RWPE1 (cell line): ENCODE measurements at regions of chr5 and their contacts with region 1.

Region 1: DNA sequence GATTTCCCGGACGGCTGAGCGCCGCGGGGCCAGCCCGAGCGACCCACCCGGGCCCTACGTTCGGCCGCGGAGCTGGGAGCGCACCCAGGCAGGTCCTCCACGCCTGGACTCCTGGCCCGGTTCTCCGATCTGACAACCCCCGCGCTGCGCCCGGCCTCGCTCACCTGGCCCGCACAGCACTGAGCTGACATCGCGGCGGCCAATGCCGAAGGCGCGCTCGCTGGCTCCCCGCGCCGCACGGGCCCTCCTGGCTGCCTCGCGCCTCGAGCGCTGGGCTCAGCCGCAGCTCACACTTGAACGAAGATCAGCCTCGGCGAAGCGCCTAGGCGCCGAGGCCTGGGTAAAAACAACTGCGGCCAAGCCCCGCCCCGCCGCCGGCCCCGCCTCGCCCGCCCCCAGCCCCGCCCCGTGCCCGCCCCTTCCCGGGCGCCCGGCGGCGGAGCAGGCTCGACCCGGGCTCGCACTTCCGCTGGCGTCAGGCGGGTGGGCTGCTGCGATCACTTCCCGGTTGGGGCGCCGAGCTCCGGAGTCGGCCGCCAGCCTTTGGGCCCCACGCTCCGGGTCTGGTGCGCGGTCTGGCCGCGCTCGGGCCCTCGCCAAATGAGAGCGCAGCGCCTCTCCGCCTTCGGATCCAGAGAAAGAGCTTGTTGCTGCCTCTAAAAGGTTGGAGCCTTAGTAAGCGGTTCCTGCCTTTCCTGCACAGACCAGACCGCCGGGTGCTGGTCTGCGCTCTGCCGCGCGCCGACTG is at the start of gene SERINC5:
- DNase-seq: peak; percentile 89
- H3K27ac ChIP-seq: peak within 1 kb of the TSS; percentile 90
- CTCF ChIP-seq: no peak

Region 2: DNA sequence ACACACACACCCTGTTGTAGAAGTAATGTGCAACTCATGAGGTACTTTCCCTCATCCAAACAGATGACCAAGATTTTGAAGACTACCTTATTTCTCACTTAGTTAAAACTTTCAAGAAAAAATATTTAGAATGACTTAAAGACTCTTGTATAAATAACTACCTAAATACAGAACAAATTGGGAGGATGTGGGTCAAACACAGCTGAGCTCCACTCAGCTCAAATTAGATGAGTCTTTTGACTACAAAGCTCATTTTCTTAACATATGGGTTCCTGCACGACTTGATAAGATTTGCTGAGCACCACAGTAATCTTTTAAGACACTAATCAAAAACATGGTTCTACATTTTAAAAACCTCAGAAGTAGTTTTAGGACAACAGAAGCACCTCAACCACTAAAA is 273.8 kb before region 1 on chr5:
- CTCF ChIA-PET with region 1: no interaction called
- POLR2A ChIA-PET with region 1: no interaction called
- DNase-seq: no peak
- H3K27ac ChIP-seq: no peak overlapping the region
- CTCF ChIP-seq: no peak

Region 3: GRCh38 chr5:80002677-80003076 is 253.2 kb before region 1 on chr5:
- CTCF ChIA-PET with region 1: no interaction called
- POLR2A ChIA-PET with region 1: interaction called, 16 read pairs
- DNase-seq: no peak
- H3K27ac ChIP-seq: no peak overlapping the region
- CTCF ChIP-seq: no peak

Region 4: GRCh38 chr5:80407735-80408482 is 152.0 kb after region 1 on chr5 and contains the start of gene ZFYVE16:
- CTCF ChIA-PET with region 1: no interaction called
- POLR2A ChIA-PET with region 1: no interaction called
- DNase-seq: peak; percentile 99
- H3K27ac ChIP-seq: peak within 1 kb of the TSS; percentile 95
- CTCF ChIP-seq: peak; percentile 66